Aorta (tissue), 5 donors: ENCODE measurements at regions of chr2 and their contacts with region 1.

Region 1: GRCh38 chr2:144516981-144517865 is 2.7 kb downstream of the ZEB2 start:
- DNase-seq: peak; percentile 73 to 84
- ATAC-seq: peak; percentile 64
- H3K4me3 ChIP-seq: peak overlapping the region; percentile 100
- H3K27ac ChIP-seq: peak overlapping the region; percentile 91 to 100
- H3K4me1 ChIP-seq: peaks cover 0 to 5% of the 10 kb centered on the region in 2 donors
- H3K27me3 ChIP-seq: no peaks in the 10 kb centered on the region

Region 2: DNA sequence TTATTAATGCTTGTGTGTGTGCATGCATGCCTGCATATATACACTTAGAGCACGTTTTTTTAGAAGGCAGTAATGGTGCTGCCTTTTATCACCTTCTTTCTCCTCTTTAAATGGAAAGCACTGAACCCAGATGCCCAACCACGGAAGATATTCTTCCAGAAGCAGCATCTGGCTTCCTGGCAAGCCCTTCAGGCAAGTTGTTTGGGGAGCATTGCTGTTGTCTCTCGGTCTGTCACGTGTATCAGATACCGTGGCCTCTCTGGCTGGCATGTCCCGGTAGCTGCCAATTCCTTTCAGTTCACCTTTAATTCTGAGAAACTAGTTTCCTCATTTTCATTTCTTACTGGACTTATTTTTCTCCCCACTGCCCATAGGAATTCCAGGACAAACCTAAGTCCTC is 800.2 kb before region 1 on chr2:
- intact Hi-C with region 1: loop called in 1 of 2 experiments (anchors 5 kb)
- DNase-seq: no peak
- ATAC-seq: no peak
- H3K4me3 ChIP-seq: peak overlapping the region in 1 of 2 donors; percentile 69
- H3K27ac ChIP-seq: peak overlapping the region; percentile 11 to 86
- H3K4me1 ChIP-seq: peaks cover 5 to 10% of the 10 kb centered on the region in 2 donors
- H3K27me3 ChIP-seq: no peaks in the 10 kb centered on the region

Region 3: DNA sequence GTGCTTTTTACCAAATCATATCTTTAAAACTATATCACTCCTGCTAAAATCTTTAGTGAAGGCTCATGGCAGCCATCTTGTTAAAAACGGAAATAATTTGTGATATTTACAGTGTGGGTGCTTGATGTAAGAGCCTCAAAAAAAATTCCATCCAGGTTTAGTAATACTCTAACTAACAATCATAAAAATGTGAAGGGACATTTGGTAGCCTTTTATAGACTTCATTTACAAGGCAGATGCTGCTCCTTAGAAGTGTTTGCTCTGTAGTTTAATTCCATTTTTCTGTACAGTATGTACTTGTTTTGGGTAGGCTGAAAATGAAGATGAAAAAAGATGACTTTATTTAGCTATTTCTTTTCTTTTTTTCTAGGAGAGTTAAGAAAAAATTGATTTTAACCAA is 522.3 kb before region 1 on chr2:
- intact Hi-C with region 1: no loop called
- DNase-seq: no peak
- ATAC-seq: no peak
- H3K4me3 ChIP-seq: no peak overlapping the region
- H3K27ac ChIP-seq: no peak overlapping the region
- H3K4me1 ChIP-seq: no peaks in the 10 kb centered on the region
- H3K27me3 ChIP-seq: no peaks in the 10 kb centered on the region

Region 4: DNA sequence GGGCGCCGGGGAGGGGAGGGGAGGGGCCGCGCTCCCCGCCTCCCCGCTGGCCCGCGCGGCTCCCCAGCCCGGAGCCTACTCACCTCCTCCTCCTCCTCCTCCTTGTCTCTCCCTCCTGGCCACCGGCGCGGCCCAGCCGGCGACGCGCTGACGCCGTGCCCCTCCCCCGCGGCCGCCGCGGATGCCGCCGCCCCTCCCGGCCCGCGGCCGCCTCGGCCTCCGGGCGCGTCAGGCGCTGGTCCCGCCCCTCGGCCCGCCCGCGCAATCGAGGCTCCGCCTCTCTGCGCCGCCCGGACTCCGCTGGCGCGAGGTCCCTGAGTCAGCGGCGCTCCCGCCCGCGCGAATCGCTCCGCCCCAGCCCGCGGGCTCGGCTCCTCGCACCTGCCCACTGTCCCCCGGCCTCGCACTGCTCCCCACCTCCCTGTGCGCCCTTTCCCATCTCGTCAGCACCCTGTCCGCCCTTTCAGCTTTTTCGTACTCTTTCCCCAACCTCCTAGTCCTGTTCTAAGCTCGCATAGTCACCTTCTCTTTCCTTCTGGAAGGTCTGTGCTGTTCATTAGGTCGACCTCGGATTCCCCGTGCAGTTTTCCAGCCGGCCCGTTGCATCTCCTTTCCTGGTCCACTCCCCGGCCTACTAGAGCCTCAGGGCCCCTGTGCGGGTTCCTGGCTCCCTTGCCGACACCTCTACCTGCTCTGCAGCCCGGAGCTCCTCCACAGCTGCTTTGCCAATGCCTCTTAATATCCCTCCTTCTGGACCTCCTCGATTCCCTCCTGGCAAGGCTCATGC is 184.7 kb before region 1 on chr2:
- intact Hi-C with region 1: loop called in 1 of 2 experiments (anchors 2 kb)
- DNase-seq: peak; percentile 89 to 95
- ATAC-seq: peak; percentile 96
- H3K4me3 ChIP-seq: peak overlapping the region; percentile 69 to 77
- H3K27ac ChIP-seq: peak overlapping the region in 1 of 2 donors; percentile 39
- H3K4me1 ChIP-seq: no peaks in the 10 kb centered on the region
- H3K27me3 ChIP-seq: no peaks in the 10 kb centered on the region

Region 5: DNA sequence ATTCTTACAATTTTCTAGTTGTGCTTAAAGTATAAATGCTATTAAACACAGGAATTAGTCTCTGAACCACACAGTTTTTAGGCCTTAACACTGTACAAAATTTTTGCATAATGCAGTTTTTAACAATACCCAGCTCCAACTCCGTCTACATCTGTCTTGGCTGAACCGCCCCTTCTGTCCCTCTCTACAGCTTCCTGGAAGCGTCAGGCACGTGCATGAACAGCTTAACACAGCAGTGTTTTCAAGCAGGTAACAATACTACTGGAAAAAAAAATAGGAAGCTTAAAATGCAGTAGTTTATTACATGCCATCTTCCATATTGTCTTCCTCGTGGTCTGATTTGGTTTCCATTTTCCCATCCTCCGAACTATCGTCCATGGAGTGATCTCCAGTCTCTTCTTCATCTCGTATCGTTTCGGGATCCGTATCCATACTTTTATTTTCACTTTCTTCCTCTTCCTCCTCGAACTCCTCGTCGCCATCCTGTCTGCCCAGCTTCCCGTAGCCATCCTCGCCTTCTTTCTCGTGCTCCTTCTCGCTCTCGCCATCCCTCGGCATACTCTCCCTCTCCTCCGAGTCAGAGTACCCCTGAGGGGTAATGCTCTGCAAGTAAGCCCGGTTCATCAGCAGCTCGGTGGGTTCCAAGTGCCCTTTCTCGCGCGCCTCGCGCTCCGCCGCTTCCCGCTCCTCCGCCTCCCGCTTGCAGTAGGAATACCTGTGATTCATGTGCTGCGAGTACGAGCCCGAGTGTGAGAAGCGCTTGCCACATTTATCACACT is 127.9 kb before region 1 on chr2:
- intact Hi-C with region 1: loop called in 1 of 2 experiments (anchors 5 kb)
- DNase-seq: no peak
- ATAC-seq: no peak
- H3K4me3 ChIP-seq: no peak overlapping the region
- H3K27ac ChIP-seq: peak overlapping the region in 1 of 2 donors; percentile 17
- H3K4me1 ChIP-seq: peaks cover 0 to 6% of the 10 kb centered on the region in 2 donors
- H3K27me3 ChIP-seq: no peaks in the 10 kb centered on the region

Region 6: DNA sequence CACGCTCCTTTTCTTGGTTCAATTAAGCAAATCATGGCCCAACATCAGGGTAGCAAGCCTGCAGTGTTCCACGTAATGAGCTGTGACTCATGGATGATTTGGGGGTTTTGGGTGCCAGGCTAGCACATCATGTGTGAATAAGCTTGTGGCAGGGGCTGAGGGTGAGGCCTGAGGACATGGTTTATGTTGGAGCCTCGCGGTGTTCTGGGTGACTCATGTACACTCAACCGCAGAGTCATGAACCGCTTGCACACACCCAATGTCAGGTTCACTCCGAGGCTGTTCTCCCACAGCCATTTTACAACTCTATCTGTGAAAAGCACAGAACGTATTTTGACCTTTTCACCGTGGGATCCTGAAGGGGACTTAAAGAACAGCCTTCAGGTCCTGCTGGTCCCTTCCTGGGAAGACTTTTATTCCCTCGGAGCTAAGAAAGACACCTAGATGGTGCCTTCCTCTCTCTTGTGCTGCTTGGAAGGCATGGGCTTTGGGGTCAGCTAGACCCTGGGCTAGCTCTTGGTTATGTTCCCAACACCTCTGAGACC is 142.6 kb after region 1 on chr2:
- intact Hi-C with region 1: no loop called
- DNase-seq: peak in 1 of 2 donors; percentile 55
- ATAC-seq: no peak
- H3K4me3 ChIP-seq: no peak overlapping the region
- H3K27ac ChIP-seq: no peak overlapping the region
- H3K4me1 ChIP-seq: no peaks in the 10 kb centered on the region
- H3K27me3 ChIP-seq: no peaks in the 10 kb centered on the region

Region 7: DNA sequence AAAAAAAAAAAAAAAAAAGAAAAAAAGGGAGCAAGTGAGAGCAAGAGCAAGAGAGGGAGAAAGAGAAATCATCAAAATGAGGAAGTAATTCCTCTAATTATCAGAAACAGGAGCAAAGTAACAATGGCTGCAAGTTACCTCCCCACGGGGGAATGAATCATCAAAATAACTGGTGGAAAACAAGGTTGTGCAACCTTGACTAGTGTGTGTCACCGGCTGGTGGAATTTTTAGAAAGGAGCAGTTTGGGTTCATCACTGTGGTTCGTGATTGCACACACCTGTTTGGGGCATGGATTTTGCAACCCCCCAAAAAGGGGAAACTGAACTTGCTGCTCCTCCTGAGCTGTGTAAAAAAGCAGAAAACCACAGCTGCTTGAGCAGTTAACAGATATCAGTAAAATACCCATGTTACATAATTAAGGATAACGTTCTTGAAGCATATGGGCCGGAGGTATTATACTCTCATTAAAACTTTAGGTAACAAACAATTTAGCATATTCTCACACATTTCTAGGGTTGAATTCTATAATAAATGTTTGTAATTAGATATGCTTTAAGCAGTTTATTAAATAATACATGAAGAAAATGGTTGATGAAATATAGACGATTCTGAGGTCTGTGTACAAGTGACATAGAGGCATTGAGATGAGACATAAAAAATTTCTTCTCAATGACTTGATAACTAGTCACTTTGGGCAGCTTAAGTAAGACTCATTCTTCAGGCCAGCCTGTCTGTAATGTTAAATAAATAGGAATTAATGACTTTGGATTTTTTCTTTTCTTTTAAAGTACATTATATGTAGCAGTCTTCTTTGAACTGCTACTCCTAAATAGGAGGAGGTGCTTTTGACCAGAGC is 186.9 kb after region 1 on chr2:
- intact Hi-C with region 1: loop called in 1 of 2 experiments (anchors 5 kb)
- DNase-seq: peak in 1 of 2 donors; percentile 44
- ATAC-seq: peak; percentile 63
- H3K4me3 ChIP-seq: no peak overlapping the region
- H3K27ac ChIP-seq: no peak overlapping the region
- H3K4me1 ChIP-seq: peaks cover 0 to 2% of the 10 kb centered on the region in 2 donors
- H3K27me3 ChIP-seq: no peaks in the 10 kb centered on the region

Region 8: GRCh38 chr2:145007093-145007959 is 490.1 kb after region 1 on chr2:
- intact Hi-C with region 1: loop called (anchors 5 to 10 kb)
- DNase-seq: peak; percentile 77 to 81
- ATAC-seq: peak; percentile 79
- H3K4me3 ChIP-seq: no peak overlapping the region
- H3K27ac ChIP-seq: peak overlapping the region; percentile 80 to 95
- H3K4me1 ChIP-seq: peaks cover under 1 to 6% of the 10 kb centered on the region in 2 donors
- H3K27me3 ChIP-seq: no peaks in the 10 kb centered on the region